Caco-2 (cell line): ENCODE measurements at regions of chr4 and their contacts with region 1.

Region 1: DNA sequence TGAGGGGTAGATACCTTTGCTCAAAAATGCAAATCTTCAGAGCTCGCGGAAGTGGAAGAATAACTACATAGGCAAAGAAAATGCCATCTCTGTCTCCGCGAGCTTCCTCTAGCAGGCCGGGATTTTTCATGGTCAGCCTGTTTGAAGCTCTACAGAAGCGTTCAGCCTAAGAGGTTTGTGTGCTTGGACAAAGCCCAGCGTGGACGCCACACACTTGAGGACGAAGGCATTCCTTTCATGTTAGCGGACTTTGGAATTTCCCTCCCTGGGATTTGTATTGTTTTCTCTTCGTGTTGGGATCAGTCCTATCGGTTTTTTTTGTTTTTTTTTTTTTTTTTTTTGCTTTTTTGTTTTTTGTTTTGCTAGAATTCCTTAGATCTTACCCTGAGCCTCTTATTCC is 53.7 kb downstream of the SMIM31 start:
- DNase-seq: peak; percentile 82
- H3K4me3 ChIP-seq: 0 out of 2 replicates have a peak overlapping the region, but pooled peaks have one; percentile 1
- H3K4me3 Mint-ChIP-seq: peak overlapping the region; percentile 33
- H3K27ac Mint-ChIP-seq: peak overlapping the region; percentile 82
- H3K4me1 ChIP-seq: peaks cover 46% of the 10 kb centered on the region
- H3K4me1 Mint-ChIP-seq: peaks cover 11% of the 10 kb centered on the region
- H3K27me3 ChIP-seq: no peaks in the 10 kb centered on the region
- H3K27me3 Mint-ChIP-seq: no peaks in the 10 kb centered on the region
- CTCF ChIP-seq: no peak

Region 2: GRCh38 chr4:164789047-164789446 is 18.6 kb before region 1 on chr4:
- CTCF ChIA-PET with region 1: no interaction called
- POLR2A ChIA-PET with region 1: no interaction called
- intact Hi-C with region 1: loop called (anchors 2 kb)
- DNase-seq: peak; percentile 37 to 39
- H3K4me3 ChIP-seq: no peak overlapping the region
- H3K4me3 Mint-ChIP-seq: no peak overlapping the region
- H3K27ac Mint-ChIP-seq: peak overlapping the region; percentile 46
- H3K4me1 ChIP-seq: peaks cover 26% of the 10 kb centered on the region
- H3K4me1 Mint-ChIP-seq: peaks cover 5% of the 10 kb centered on the region
- H3K27me3 ChIP-seq: no peaks in the 10 kb centered on the region
- H3K27me3 Mint-ChIP-seq: no peaks in the 10 kb centered on the region
- CTCF ChIP-seq: no peak

Region 3: DNA sequence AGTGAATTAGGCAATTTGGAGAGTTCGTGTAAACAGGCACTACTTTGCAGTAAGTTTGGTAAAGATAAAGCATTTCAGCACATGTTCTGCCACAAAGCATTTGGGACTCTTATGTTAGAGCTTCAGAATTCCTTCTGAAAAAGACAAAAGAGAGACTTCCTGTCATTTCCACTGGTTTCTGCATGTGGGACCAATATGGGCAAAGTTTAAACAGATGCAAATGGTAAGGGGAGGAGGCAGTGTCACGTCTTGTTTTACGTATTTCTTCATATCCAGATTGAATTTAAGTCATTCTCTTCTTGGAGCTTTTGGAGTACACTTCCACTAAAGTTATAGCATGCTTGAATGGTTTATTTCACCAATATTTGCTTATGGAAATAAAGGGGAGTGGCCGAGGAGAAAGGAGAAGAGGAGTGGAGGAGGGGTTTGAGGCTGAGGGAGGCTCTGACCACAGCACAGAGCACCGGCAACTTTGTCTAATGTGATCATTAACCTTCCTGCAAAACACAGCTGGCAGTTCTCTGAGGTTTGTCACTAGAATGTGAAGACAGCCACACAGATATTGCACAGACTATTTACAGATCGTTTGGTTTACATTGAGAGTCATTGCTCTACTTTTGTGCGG is 69.2 kb after region 1 on chr4 and contains the start of gene APELA:
- CTCF ChIA-PET with region 1: interaction called, 3 read pairs
- POLR2A ChIA-PET with region 1: no interaction called
- intact Hi-C with region 1: loop called (anchors 1 kb)
- DNase-seq: peak; percentile 71 to 74
- H3K4me3 ChIP-seq: peak within 1 kb of the TSS; percentile 26
- H3K4me3 Mint-ChIP-seq: peak within 1 kb of the TSS; percentile 74
- H3K27ac Mint-ChIP-seq: peak within 1 kb of the TSS; percentile 81
- H3K4me1 ChIP-seq: peaks cover 62% of the 10 kb centered on the region
- H3K4me1 Mint-ChIP-seq: peaks cover 26% of the 10 kb centered on the region
- H3K27me3 ChIP-seq: no peaks in the 10 kb centered on the region
- H3K27me3 Mint-ChIP-seq: no peaks in the 10 kb centered on the region
- CTCF ChIP-seq: no peak
- total RNA-seq, gene APELA: 30.6 and 34.8 TPM in 2 replicates